Astrocyte of the spinal cord (primary cell): ENCODE measurements at regions of chr14 and their contacts with region 1.

Region 1: DNA sequence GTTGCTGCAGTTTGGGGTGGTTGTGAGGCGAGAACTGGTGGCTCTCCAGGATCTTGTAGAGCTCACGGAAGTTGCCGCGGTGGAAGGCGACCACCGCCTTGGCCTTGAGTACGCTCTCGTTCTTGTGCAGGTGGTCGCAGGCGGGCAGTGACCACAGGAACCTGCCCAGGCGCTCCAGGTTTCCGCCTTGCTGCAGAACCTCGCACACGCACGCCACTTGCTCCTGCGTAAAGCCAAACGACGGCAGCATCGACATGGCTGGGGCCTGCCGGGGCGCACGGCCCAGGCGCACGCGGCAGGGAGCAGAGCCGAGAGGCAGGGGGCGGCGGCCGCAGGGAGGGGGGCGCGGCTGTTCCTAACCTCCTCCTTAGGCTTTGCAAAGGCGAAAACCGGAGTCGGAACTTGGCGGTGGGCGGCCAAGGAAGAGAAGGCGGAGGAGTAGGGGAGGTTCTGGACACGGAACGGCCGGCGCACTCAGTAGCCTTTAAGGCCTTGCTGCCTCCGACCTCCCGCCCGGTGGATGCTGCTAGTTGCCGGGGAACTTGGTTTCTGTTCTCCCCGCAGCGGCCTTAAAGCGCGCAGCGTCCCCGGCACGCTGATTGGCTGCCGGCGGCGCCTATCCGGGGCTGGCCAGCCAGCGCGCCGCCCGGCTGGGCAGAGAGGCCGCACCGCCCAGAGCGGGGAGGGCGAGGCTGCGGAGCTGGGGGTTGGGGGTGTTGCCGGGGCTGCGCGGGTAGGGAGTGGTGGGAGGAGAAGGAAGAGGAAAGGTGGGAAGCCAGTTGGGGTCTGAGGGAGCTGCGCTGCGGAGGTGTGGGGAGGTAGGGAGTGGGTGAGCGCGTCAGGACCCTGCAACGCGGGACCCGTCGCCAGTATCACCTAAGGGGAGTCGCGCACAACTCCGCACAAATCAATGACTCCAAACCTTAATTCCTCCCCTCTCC is at the start of gene SIX1:
- DNase-seq: peak; percentile 95
- H3K4me3 ChIP-seq: peak within 1 kb of the TSS; percentile 66
- CTCF ChIP-seq: no peak

Region 2: GRCh38 chr14:60561845-60562746 is 87.1 kb before region 1 on chr14:
- in situ Hi-C with region 1: no loop called
- DNase-seq: peak; percentile 80
- H3K4me3 ChIP-seq: no peak overlapping the region
- CTCF ChIP-seq: peak; percentile 76

Region 3: GRCh38 chr14:60590991-60591414 is 58.2 kb before region 1 on chr14:
- in situ Hi-C with region 1: no loop called
- DNase-seq: peak; percentile 45
- H3K4me3 ChIP-seq: no peak overlapping the region
- CTCF ChIP-seq: no peak

Region 4: DNA sequence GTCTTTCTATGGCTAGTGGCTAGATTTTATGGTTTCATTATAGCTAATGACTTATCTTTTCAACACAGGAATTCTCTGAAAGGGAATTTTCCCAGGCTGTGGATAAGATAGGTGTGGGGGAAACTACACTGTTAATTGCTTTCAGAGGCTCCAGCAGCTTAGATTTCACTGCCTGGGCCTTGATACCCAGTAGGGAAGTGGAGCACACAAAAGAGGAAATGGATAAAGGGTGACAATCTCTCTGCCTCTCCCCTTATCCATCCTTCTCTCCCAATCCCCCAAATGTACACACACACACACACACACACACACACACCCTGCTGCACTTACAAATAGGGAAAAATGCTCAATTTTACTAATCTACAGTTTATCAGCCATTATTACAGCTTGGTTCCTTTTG is 55.9 kb after region 1 on chr14:
- in situ Hi-C with region 1: no loop called
- DNase-seq: no peak
- H3K4me3 ChIP-seq: no peak overlapping the region
- CTCF ChIP-seq: no peak

Region 5: GRCh38 chr14:60744566-60744965 is 95.4 kb after region 1 on chr14:
- in situ Hi-C with region 1: no loop called
- DNase-seq: no peak
- H3K4me3 ChIP-seq: no peak overlapping the region
- CTCF ChIP-seq: no peak

Region 6: DNA sequence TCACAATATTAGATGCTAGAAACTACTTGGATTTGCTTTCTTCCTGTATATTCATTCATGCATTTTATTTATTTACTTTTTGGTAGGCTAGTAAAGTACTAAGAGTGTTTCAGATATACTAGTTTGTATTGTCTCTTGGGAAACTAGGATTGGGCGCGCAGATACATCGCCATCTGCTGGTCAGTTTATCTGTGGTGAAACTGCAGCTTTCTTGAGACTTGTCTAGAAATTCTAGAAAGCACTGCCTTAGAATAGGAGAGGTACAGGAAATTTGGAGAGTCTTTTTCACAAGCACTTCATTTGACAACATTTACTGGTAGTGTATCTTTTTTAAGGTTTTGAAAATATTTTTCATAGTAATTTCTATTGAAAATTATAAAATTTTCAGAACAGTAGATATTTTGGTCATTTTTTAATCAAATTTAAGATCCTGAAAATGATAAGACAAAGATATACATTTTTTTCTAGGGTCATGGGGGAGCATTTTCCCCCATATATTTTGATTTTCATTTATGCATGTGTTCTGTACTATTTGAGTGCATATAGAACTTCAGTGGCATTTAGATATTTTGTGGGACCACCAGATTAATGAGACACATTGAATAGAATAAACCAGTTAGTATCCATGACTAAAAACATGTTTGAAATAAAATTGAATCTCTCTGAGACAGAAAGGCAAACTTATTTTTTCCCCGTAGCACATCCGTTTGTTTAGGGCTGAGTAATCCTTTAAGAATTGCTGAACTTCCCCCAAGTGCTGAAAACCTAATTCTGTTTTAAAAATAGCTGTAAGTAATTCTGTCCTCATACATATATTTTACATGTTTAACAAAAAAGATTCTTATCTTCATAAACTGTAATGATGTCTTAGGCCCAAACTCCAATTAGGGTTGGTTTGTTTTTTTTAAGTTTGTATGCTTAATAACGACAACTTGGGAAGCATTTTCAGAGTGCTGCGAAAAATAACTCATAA is 376.3 kb after region 1 on chr14:
- in situ Hi-C with region 1: loop called (anchors 25 kb)
- DNase-seq: peak; percentile 82
- H3K4me3 ChIP-seq: no peak overlapping the region
- CTCF ChIP-seq: peak; percentile 90